Psoas muscle (tissue), 8 donors: ENCODE measurements at regions of chr22 and their contacts with region 1.

Region 1: DNA sequence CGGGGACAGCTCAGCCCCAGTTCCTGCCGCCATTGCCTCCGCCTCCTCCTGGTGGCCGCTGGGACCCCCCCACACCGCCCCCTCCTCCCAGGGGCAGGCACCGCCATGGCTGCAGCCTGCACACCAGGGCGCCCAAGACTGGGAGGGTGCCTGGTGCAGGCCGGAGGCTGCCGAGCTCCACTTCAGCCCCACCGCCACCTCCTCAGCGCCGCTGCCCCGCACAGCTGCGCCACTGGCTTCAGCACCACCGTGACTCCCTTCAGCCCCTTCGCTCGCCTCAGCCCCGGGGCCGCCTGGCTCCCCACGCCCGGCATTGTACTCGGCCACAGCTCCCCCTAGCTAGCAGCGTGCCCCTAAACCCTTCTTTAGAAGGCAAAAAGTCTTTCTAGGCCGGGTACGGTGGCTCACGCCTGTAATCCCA is 131.1 kb downstream of the CRYBB2 start:
- DNase-seq: no peak
- ATAC-seq: no peak
- H3K4me3 ChIP-seq: no peak overlapping the region
- H3K27ac ChIP-seq: no peak overlapping the region
- H3K4me1 ChIP-seq: no peaks in the 10 kb centered on the region
- H3K27me3 ChIP-seq: no peaks in the 10 kb centered on the region
- CTCF ChIP-seq: no peak

Region 2: GRCh38 chr22:25085930-25086901 is 264.3 kb before region 1 on chr22:
- intact Hi-C with region 1: loop called in 1 of 2 experiments (anchors 5 kb)
- DNase-seq: peak; percentile 42 to 65
- ATAC-seq: peak in 3 of 4 donors; percentile 50 to 71 (median 53)
- H3K4me3 ChIP-seq: no peak overlapping the region
- H3K27ac ChIP-seq: no peak overlapping the region
- H3K4me1 ChIP-seq: no peaks in the 10 kb centered on the region
- H3K27me3 ChIP-seq: no peaks in the 10 kb centered on the region
- CTCF ChIP-seq: no peak